ENCODE measurements at regions of chr16 and their contacts with region 1.

Region 1: DNA sequence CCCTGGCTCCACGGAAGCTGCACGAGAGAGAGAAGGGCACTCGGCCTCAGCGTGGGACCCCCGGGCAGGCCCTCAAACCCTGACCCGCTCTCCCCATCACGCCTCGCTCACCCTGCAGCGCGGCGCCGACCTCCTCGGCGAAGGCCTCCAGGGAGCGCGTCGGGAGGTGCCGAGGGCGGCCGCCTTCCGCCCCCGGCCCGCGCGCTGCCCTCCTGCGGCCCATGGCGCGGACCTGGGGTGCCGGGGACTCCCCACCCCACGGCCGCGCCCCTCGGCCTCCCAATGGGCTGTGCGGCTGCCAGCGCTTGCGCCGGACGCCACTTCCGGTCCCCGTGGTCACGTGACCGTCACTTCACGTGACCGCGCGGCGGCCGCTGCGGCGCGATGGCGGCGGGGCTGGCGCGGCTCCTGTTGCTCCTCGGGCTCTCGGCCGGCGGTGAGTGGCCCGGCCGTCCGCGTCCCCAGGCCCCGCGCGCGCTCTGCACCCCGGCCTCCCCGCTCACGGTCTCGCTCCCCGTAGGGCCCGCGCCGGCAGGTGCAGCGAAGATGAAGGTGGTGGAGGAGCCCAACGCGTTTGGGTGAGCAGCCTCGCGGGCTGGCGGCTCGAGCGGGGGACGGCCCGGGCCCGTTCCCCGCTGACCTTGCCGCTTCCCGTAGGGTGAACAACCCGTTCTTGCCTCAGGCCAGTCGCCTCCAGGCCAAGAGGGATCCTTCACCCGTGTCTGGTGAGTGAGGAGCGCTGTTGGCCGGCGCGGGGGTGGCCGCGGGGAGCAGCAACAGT is at the starts of genes GNPTG and TSR3:
- DNase-seq: peak; percentile 76 to 81
- H3K4me3 ChIP-seq: peak within 1 kb of the TSS; percentile 43 to 97 (median 95)
- H3K27ac ChIP-seq: peak within 1 kb of the TSS in 2 of 3 donors; percentile 6 to 49
- H3K4me1 ChIP-seq: peaks cover 18 to 23% of the 10 kb centered on the region in 2 donors
- H3K27me3 ChIP-seq: no peaks in the 10 kb centered on the region
- CTCF ChIP-seq: peak in 1 of 6 experiments; percentile 31
- POLR2A ChIP-seq: peak; percentile 3 to 69
- total RNA-seq, gene GNPTG: 53.6 to 121 (median 70.0) TPM
- total RNA-seq, gene TSR3: 84.1 to 107 (median 96.7) TPM

Region 2: GRCh38 chr16:1244881-1245280 is 106.9 kb before region 1 on chr16:
- intact Hi-C with region 1: no loop called
- DNase-seq: no peak
- H3K4me3 ChIP-seq: no peak overlapping the region
- H3K27ac ChIP-seq: no peak overlapping the region
- H3K4me1 ChIP-seq: no peaks in the 10 kb centered on the region
- H3K27me3 ChIP-seq: no peaks in the 10 kb centered on the region
- CTCF ChIP-seq: no peak
- POLR2A ChIP-seq: no peak

Region 3: DNA sequence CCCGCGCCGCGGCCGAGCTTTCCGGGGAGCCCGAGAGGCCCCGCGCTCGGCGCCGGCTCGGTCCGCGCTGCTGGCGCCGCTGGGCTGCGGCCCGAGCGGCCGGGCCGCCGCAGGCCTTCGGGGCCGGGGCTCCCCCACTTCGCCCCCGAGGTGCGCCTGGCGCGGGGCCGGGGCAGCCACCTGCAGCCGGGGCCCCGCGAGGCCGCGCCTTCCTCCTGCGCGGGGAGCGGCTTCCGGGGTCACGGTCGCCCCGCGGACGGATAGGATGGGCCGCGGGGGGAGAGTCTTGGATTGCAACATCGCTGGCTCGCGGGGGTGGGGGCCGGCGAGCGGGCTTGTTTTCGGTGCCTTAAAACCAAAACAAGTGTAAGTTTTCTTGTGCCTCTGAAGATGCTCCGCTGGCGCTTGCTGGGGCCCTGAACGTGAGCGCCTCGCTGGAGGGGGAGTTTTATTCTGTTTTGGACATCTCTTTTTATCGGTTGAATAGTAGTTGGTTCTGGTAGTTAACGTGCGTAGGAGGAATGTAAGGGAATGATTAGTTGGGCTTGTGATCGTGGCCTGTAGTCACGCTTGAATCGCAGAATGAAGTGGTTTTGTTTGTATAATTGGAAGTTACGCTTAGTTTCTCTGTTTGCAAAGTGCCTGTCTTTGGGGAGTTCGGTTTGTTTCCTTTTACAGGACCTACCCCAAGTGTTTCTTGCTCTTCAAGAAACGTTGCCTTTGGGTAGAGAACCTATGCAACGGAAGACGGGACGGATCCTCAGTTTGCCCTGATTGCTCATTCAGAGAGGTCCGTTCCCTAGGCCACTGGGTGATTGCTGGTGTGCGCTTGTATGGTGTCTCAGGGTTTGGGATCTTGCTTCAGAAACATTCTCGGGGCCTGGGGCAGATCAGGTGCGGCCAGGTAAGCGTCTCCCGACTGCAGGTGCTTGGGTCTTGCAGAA is 41.6 kb before region 1 on chr16:
- intact Hi-C with region 1: loop called (anchors 5 kb)
- DNase-seq: peak; percentile 55 to 58
- H3K4me3 ChIP-seq: peak overlapping the region in 2 of 3 donors; percentile 79 to 87
- H3K27ac ChIP-seq: peak overlapping the region; percentile 49 to 73 (median 53)
- H3K4me1 ChIP-seq: peaks cover 18 to 21% of the 10 kb centered on the region in 2 donors
- H3K27me3 ChIP-seq: no peaks in the 10 kb centered on the region
- CTCF ChIP-seq: no peak
- POLR2A ChIP-seq: no peak

Region 4: DNA sequence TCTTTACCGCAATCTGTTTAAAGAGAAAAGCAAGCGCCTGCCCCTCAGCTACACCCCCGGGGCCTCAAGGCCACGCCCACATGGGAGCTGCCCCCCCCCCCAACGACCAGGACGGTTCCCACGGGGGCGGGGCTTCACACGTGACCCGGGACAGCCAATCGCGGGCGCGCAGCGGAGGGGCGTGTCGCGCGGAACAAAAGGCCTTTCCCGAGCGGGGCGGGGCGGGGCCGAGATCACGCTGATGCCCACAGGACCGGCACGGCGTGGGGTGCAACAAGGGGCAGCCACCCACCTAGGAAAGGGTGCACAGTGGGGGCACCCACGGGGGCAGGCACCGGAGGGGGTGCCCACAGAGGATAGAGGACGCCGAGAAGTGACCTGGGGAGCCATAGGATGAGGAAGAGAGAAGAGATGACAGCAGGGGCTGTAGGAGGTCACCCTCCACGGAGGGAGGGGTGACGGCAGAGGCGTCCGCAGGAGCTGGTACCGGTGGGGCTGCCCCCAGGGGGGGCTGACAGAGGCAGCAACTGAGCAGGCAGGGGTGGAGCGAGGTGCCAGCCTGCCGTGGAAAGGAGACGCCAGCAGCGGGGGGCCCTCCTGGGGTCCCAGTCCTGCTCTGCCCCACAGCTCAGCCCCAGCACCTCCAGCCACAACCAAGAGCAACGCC is 56.5 kb after region 1 on chr16:
- intact Hi-C with region 1: loop called (anchors 5 kb)
- DNase-seq: peak; percentile 93 to 94
- H3K4me3 ChIP-seq: peak overlapping the region in 1 of 3 donors; percentile 18
- H3K27ac ChIP-seq: no peak overlapping the region
- H3K4me1 ChIP-seq: peaks cover 9 to 13% of the 10 kb centered on the region in 2 donors
- H3K27me3 ChIP-seq: no peaks in the 10 kb centered on the region
- CTCF ChIP-seq: no peak
- POLR2A ChIP-seq: no peak

Measured in thyroid gland (tissue), 4 donors.